H1 (cell line): ENCODE measurements at regions of chr16 and their contacts with region 1.

Region 1: GRCh38 chr16:1826691-1827575 is at the starts of genes FAHD1 and HAGH:
- DNase-seq: peak; percentile 83 to 95
- H3K4me3 ChIP-seq: peak within 1 kb of the TSS; percentile 83 to 95 (median 90)
- H3K27ac ChIP-seq: peak within 1 kb of the TSS; percentile 58; the same call in 1 of the 2 replicates
- H3K4me1 ChIP-seq: peaks cover 0 to 10% (median 3%) of the 10 kb centered on the region in 4 experiments; a peak in 5 of 7 replicates
- H3K27me3 ChIP-seq: peaks cover 0 to 5% (median 0%) of the 10 kb centered on the region in 4 experiments; a peak in 4 of 7 replicates
- CTCF ChIP-seq: no peak
- EP300 ChIP-seq: peak; percentile 19 to 43; a peak in 1 of 3 replicates
- POLR2A ChIP-seq: peak in 1 of 2 experiments; percentile 73; a peak in 1 of 3 replicates
- RAD21 ChIP-seq: no peak
- total RNA-seq, gene FAHD1: 20.4 and 20.5 TPM in 2 replicates
- total RNA-seq, gene HAGH: 28.7 and 34.4 TPM in 2 replicates

Region 2: GRCh38 chr16:1772736-1773584 is 54.0 kb before region 1 on chr16 and contains the starts of genes EME2 and MRPS34:
- CTCF ChIA-PET with region 1: interaction called, 11 read pairs
- POLR2A ChIA-PET with region 1: interaction called, 13 read pairs
- DNase-seq: peak; percentile 51 to 95
- H3K4me3 ChIP-seq: peak within 1 kb of the TSS; percentile 82 to 91 (median 82)
- H3K27ac ChIP-seq: peak within 1 kb of the TSS; percentile 62
- H3K4me1 ChIP-seq: peaks cover 0 to 12% (median 10%) of the 10 kb centered on the region in 4 experiments; a peak in 5 of 7 replicates
- H3K27me3 ChIP-seq: no peaks in the 10 kb centered on the region
- CTCF ChIP-seq: peak in 2 of 3 experiments; percentile 70 to 80; a peak in 3 of 4 replicates
- EP300 ChIP-seq: no peak
- POLR2A ChIP-seq: peak in 1 of 2 experiments; percentile 44; a peak in 1 of 3 replicates
- RAD21 ChIP-seq: peak; percentile 27 to 50; a peak in 3 of 4 replicates
- total RNA-seq, gene EME2: 19.3 and 19.7 TPM in 2 replicates
- total RNA-seq, gene MRPS34: 252 and 267 TPM in 2 replicates

Region 3: GRCh38 chr16:1782352-1783091 is 44.4 kb before region 1 on chr16 and contains the starts of genes NUBP2 and SPSB3:
- CTCF ChIA-PET with region 1: interaction called, 14 read pairs
- POLR2A ChIA-PET with region 1: interaction called, 5 read pairs
- DNase-seq: peak; percentile 94 to 100
- H3K4me3 ChIP-seq: peak within 1 kb of the TSS; percentile 88 to 98 (median 92)
- H3K27ac ChIP-seq: peak within 1 kb of the TSS; percentile 39; the same call in 1 of the 2 replicates
- H3K4me1 ChIP-seq: peaks cover 0 to 7% (median 4%) of the 10 kb centered on the region in 4 experiments; a peak in 5 of 7 replicates
- H3K27me3 ChIP-seq: no peaks in the 10 kb centered on the region
- CTCF ChIP-seq: no peak
- EP300 ChIP-seq: peak in 1 of 2 experiments; percentile 3; a peak in 1 of 3 replicates
- POLR2A ChIP-seq: no peak; a peak in 1 of 3 replicates
- RAD21 ChIP-seq: no peak
- total RNA-seq, gene NUBP2: 68.0 and 70.3 TPM in 2 replicates
- total RNA-seq, gene SPSB3: 22.5 and 25.3 TPM in 2 replicates

Region 4: GRCh38 chr16:1815461-1815860 is 11.5 kb before region 1 on chr16:
- CTCF ChIA-PET with region 1: interaction called, 10 read pairs
- POLR2A ChIA-PET with region 1: interaction called, 7 read pairs
- DNase-seq: no peak
- H3K4me3 ChIP-seq: no peak overlapping the region
- H3K27ac ChIP-seq: no peak overlapping the region
- H3K4me1 ChIP-seq: no peaks in the 10 kb centered on the region
- H3K27me3 ChIP-seq: no peaks in the 10 kb centered on the region
- CTCF ChIP-seq: no peak
- EP300 ChIP-seq: no peak
- POLR2A ChIP-seq: no peak
- RAD21 ChIP-seq: no peak

Region 5: GRCh38 chr16:1839554-1839953 is 12.6 kb after region 1 on chr16:
- CTCF ChIA-PET with region 1: interaction called, 3 read pairs
- POLR2A ChIA-PET with region 1: interaction called, 13 read pairs
- DNase-seq: no peak
- H3K4me3 ChIP-seq: no peak overlapping the region
- H3K27ac ChIP-seq: no peak overlapping the region
- H3K4me1 ChIP-seq: no peaks in the 10 kb centered on the region
- H3K27me3 ChIP-seq: no peaks in the 10 kb centered on the region; a peak in 2 of 7 replicates
- CTCF ChIP-seq: no peak
- EP300 ChIP-seq: no peak
- POLR2A ChIP-seq: no peak
- RAD21 ChIP-seq: no peak

Region 6: GRCh38 chr16:1959269-1960049 is 132.5 kb after region 1 on chr16 and contains the start of gene NDUFB10:
- CTCF ChIA-PET with region 1: no interaction called
- POLR2A ChIA-PET with region 1: interaction called, 10 read pairs
- DNase-seq: peak; percentile 76 to 96
- H3K4me3 ChIP-seq: peak within 1 kb of the TSS; percentile 78 to 93 (median 86)
- H3K27ac ChIP-seq: peak within 1 kb of the TSS; percentile 55
- H3K4me1 ChIP-seq: peaks cover 0 to 16% (median under 1%) of the 10 kb centered on the region in 4 experiments; a peak in 4 of 7 replicates
- H3K27me3 ChIP-seq: peaks cover 0 to 2% (median 0%) of the 10 kb centered on the region in 4 experiments; a peak in 3 of 7 replicates
- CTCF ChIP-seq: peak in 1 of 3 experiments; percentile 35; a peak in 1 of 4 replicates
- EP300 ChIP-seq: no peak
- POLR2A ChIP-seq: peak in 1 of 2 experiments; percentile 91; a peak in 2 of 3 replicates
- RAD21 ChIP-seq: no peak
- total RNA-seq, gene NDUFB10: 183 and 197 TPM in 2 replicates

Region 7: GRCh38 chr16:2003827-2004641 is 177.1 kb after region 1 on chr16:
- CTCF ChIA-PET with region 1: no interaction called
- POLR2A ChIA-PET with region 1: no interaction called
- DNase-seq: peak; percentile 90 to 99
- H3K4me3 ChIP-seq: peak overlapping the region in 2 of 4 experiments; percentile 14 to 33; a peak in 3 of 8 replicates
- H3K27ac ChIP-seq: peak overlapping the region; percentile 53; the same call in 1 of the 2 replicates
- H3K4me1 ChIP-seq: peaks cover 0 to 33% (median 18%) of the 10 kb centered on the region in 4 experiments; a peak in 5 of 7 replicates
- H3K27me3 ChIP-seq: no peaks in the 10 kb centered on the region
- CTCF ChIP-seq: peak in 2 of 3 experiments; percentile 98 to 99; a peak in 3 of 4 replicates
- EP300 ChIP-seq: peak in 1 of 2 experiments; percentile 12; a peak in 1 of 3 replicates
- POLR2A ChIP-seq: no peak
- RAD21 ChIP-seq: peak; percentile 55 to 62